ENCODE measurements at regions of chr3 and their contacts with region 1.

Region 1: DNA sequence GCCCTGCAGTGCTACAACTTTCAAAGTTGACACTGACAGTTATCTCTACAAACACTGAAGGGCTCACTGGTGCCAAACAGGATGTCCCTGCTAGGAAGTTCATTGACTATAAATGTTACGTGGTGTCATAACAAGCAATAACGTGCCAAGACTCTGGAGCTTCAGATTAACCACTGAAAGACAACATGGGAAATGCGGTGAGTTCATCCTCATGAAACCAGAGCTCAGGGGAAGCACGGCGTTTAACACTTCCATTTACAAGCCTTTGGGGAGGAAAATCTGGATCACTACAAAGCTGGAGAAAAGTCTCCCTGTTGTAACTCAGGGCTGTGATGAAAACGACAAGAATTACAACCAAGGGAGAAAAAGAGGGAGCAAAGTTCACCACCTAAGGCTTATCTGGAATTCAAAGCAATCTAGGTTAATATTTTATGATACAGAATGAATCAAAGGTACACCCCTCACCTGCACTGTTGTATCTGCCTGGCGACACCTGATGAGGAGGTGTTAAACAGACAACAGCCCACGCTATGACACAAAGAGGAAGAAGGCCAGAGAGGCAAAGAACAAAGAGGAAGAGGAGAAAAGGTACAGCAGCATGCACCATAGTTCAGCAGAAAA is 27.0 kb downstream of the SHQ1 start:
- DNase-seq: no peak
- H3K4me3 ChIP-seq: no peak overlapping the region
- H3K27ac ChIP-seq: no peak overlapping the region
- H3K4me1 ChIP-seq: peaks cover 9 to 24% (median 17%) of the 10 kb centered on the region in 3 donors
- H3K27me3 ChIP-seq: no peaks in the 10 kb centered on the region
- CTCF ChIP-seq: no peak
- POLR2A ChIP-seq: no peak

Region 2: DNA sequence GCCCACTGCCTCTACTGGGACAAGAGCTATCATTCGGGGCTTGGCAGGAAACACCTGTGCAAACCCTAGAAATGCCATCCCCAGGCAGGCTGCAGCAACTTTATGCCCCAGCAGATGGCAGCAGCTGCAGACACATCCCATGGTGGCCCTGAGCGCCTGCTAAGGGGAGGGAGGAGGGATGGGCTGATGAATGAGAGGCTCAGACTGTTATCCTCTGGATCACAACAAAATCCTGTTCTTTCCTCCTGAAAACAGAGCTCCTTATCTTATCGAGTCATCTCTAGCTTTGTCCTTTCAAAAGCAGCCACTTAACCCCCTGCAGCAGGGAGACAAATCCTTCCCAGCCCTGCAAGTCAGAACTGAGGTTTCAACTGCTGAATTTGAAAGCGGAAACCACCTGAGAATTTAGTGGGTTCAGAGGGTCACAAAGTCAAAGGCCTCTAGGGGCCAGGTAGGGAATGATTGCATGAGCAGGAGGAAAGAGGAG is 945.8 kb before region 1 on chr3:
- intact Hi-C with region 1: loop called (anchors 10 kb)
- DNase-seq: no peak
- H3K4me3 ChIP-seq: no peak overlapping the region
- H3K27ac ChIP-seq: no peak overlapping the region
- H3K4me1 ChIP-seq: no peaks in the 10 kb centered on the region
- H3K27me3 ChIP-seq: no peaks in the 10 kb centered on the region
- CTCF ChIP-seq: peak; percentile 68 to 87 (median 82)
- POLR2A ChIP-seq: no peak

Region 3: GRCh38 chr3:71955240-71956068 is 865.8 kb before region 1 on chr3:
- intact Hi-C with region 1: loop called (anchors 10 kb)
- DNase-seq: no peak
- H3K4me3 ChIP-seq: no peak overlapping the region
- H3K27ac ChIP-seq: no peak overlapping the region
- H3K4me1 ChIP-seq: peaks cover 0 to 11% (median 5%) of the 10 kb centered on the region in 3 donors
- H3K27me3 ChIP-seq: peaks cover 0 to under 1% (median 0%) of the 10 kb centered on the region in 4 donors
- CTCF ChIP-seq: peak in 5 of 6 experiments; percentile 46 to 72 (median 68)
- POLR2A ChIP-seq: no peak

Region 4: GRCh38 chr3:72665701-72666443 is 155.4 kb before region 1 on chr3:
- intact Hi-C with region 1: loop called (anchors 5 kb)
- DNase-seq: no peak
- H3K4me3 ChIP-seq: no peak overlapping the region
- H3K27ac ChIP-seq: no peak overlapping the region
- H3K4me1 ChIP-seq: peaks cover 4 to 37% (median 6%) of the 10 kb centered on the region in 3 donors
- H3K27me3 ChIP-seq: peaks cover 0 to 14% (median 0%) of the 10 kb centered on the region in 4 donors
- CTCF ChIP-seq: peak in 5 of 6 experiments; percentile 55 to 73 (median 64)
- POLR2A ChIP-seq: no peak

Measured in esophagus squamous epithelium (tissue), 5 donors.